IMR-90 (cell line): ENCODE measurements at regions of chr13 and their contacts with region 1.

Region 1: DNA sequence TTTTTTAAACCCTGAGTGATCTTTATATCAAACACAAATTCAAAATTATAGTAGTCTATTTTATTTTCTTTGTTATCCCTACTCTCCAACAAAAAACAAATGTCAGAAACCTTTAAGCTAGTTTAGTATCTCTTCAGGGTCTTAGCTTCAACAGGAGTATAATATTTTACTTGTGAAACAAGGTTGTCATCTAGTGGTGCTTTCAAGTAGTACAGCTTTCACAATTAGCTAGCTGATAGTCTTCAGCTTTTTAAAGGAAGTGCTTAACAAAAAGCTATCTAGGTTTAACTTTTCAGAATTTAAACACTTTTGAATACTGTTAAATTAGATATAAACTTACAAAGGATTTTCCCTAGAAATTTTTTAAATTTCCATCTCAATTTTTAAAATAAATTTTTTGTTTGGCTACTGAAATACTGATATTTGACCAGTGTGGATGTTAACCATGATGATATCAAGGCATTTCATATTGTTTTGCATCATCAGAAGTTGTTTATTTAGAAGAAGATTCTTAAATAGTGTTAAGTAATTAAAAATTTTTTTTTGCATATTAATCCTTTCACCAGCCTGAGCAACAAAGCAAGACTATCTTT is 34.2 kb downstream of the TDRD3 start:
- DNase-seq: peak; percentile 72
- ATAC-seq: peak; percentile 95
- H3K4me3 ChIP-seq: no peak overlapping the region
- H3K27ac ChIP-seq: no peak overlapping the region
- H3K4me1 ChIP-seq: no peaks in the 10 kb centered on the region
- H3K27me3 ChIP-seq: no peaks in the 10 kb centered on the region
- CTCF ChIP-seq: peak; percentile 94
- POLR2A ChIP-seq: no peak
- RAD21 ChIP-seq: peak; percentile 83

Region 2: DNA sequence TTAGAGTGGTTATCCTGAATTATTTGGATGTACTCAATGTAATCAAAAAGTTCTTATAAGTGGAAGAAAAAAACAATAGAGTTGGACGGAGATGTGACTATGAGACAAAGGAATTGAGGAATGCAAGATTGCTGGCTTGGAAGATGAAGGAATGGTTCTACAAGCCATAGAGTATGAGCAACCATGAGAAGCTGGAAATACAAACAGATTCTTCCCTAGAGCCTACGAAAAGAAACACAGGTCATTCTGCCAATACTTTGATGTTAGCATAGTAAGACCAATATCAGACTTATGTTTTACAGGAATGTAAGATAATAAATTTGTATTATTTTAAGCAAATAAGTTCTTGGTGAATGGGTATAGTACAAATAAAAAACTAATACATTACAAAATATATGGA is 516.6 kb before region 1 on chr13:
- CTCF ChIA-PET with region 1: no interaction called
- POLR2A ChIA-PET with region 1: no interaction called
- dilution Hi-C with region 1: no loop called
- in situ Hi-C with region 1: no loop called
- intact Hi-C with region 1: loop called (anchors 5 kb)
- DNase-seq: peak; percentile 68
- ATAC-seq: peak; percentile 60
- H3K4me3 ChIP-seq: no peak overlapping the region
- H3K27ac ChIP-seq: no peak overlapping the region
- H3K4me1 ChIP-seq: no peaks in the 10 kb centered on the region
- H3K27me3 ChIP-seq: no peaks in the 10 kb centered on the region
- CTCF ChIP-seq: no peak
- POLR2A ChIP-seq: no peak
- RAD21 ChIP-seq: no peak

Region 3: GRCh38 chr13:60163478-60164233 is 267.5 kb before region 1 on chr13 and contains the start of gene DIAPH3:
- CTCF ChIA-PET with region 1: no interaction called
- POLR2A ChIA-PET with region 1: no interaction called
- dilution Hi-C with region 1: no loop called
- in situ Hi-C with region 1: no loop called
- intact Hi-C with region 1: loop called (anchors 5 kb)
- DNase-seq: peak; percentile 95
- ATAC-seq: peak; percentile 99
- H3K4me3 ChIP-seq: peak within 1 kb of the TSS; percentile 64
- H3K27ac ChIP-seq: peak within 1 kb of the TSS; percentile 95
- H3K4me1 ChIP-seq: peaks cover 4% of the 10 kb centered on the region; the same call in 1 of the 2 replicates
- H3K27me3 ChIP-seq: no peaks in the 10 kb centered on the region
- CTCF ChIP-seq: no peak
- POLR2A ChIP-seq: peak; percentile 80
- RAD21 ChIP-seq: no peak
- total RNA-seq, gene DIAPH3: 9.3 and 16.1 TPM in 2 replicates

Region 4: GRCh38 chr13:60226507-60226906 is 204.7 kb before region 1 on chr13:
- CTCF ChIA-PET with region 1: no interaction called
- POLR2A ChIA-PET with region 1: no interaction called
- dilution Hi-C with region 1: no loop called
- in situ Hi-C with region 1: no loop called
- intact Hi-C with region 1: loop called (anchors 5 kb)
- DNase-seq: peak; percentile 47
- ATAC-seq: peak; percentile 72
- H3K4me3 ChIP-seq: no peak overlapping the region
- H3K27ac ChIP-seq: no peak overlapping the region
- H3K4me1 ChIP-seq: no peaks in the 10 kb centered on the region
- H3K27me3 ChIP-seq: peaks cover 8% of the 10 kb centered on the region
- CTCF ChIP-seq: peak; percentile 57
- POLR2A ChIP-seq: no peak
- RAD21 ChIP-seq: peak; percentile 68

Region 5: DNA sequence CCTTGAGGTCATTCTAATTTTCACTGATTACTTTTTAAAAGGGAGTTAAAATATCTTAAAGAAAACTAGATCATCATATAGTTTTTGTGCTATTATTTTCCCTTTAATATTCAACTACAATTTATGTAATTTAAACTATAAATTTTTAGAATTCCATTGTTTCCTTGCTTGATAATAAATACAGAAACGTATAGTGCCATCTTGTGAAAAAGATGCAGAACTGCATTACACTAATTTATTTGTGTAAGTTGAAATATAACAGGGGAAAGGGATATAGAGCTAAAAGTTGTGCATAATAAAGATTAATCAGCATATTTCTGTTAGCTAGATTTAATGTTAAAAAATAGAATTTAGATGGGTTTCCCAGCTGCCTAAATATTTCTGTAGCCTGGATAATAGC is 95.7 kb before region 1 on chr13:
- CTCF ChIA-PET with region 1: no interaction called
- POLR2A ChIA-PET with region 1: no interaction called
- dilution Hi-C with region 1: no loop called
- in situ Hi-C with region 1: no loop called
- intact Hi-C with region 1: loop called (anchors 2 kb)
- DNase-seq: peak; percentile 22
- ATAC-seq: peak; percentile 67
- H3K4me3 ChIP-seq: no peak overlapping the region
- H3K27ac ChIP-seq: no peak overlapping the region
- H3K4me1 ChIP-seq: no peaks in the 10 kb centered on the region
- H3K27me3 ChIP-seq: peaks cover 2% of the 10 kb centered on the region
- CTCF ChIP-seq: peak; percentile 69
- POLR2A ChIP-seq: no peak
- RAD21 ChIP-seq: peak; percentile 59